Body of pancreas (tissue), 4 donors: ENCODE measurements at regions of chr20 and their contacts with region 1.

Region 1: GRCh38 chr20:21503345-21503744 is 10.5 kb downstream of the NKX2-2 start:
- DNase-seq: no peak
- ATAC-seq: no peak
- H3K4me3 ChIP-seq: no peak overlapping the region
- H3K27ac ChIP-seq: no peak overlapping the region
- H3K4me1 ChIP-seq: peaks cover 16% of the 10 kb centered on the region
- H3K27me3 ChIP-seq: peaks cover 0 to 16% of the 10 kb centered on the region in 2 donors
- CTCF ChIP-seq: no peak
- POLR2A ChIP-seq: no peak

Region 2: DNA sequence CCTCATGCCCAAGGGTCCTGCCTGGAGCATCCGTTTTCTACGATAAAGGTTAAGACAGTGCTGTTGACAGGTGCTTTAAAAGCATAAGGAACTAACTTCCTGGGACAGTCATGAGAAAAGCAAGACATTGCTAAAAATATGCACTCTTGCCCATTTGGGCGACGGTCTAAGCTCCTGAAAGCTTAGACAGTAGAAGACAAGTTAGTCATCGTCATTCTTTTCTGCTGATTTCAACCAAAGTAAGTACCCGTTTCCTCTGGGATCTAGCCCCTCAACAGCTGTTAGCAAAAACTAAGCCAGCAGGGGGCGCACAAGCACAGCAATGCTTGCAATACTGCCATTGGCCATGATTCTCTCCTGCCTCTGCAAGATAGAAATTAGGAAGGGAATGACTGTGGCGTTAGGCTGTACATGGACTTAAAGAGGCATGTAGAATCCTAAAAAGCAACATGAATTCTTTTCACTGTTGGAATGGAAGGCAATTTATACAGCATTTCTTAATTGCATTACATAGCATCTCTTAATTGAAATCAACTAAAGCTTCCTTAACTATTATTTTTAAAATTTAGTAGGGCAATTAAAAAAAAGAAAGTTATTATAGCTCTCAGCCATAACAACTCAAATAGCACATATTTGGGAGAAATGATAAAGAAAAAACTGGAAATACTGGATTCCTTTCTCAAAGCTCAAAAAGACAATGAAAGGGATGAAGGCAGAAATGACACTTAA is 643.1 kb before region 1 on chr20:
- intact Hi-C with region 1: loop called (anchors 5 kb)
- DNase-seq: peak; percentile 83 to 91 (median 86)
- ATAC-seq: peak; percentile 68
- H3K4me3 ChIP-seq: no peak overlapping the region
- H3K27ac ChIP-seq: no peak overlapping the region
- H3K4me1 ChIP-seq: no peaks in the 10 kb centered on the region
- H3K27me3 ChIP-seq: no peaks in the 10 kb centered on the region
- CTCF ChIP-seq: peak; percentile 84 to 95 (median 90)
- POLR2A ChIP-seq: no peak

Region 3: GRCh38 chr20:21099751-21100577 is 403.4 kb before region 1 on chr20:
- intact Hi-C with region 1: no loop called
- DNase-seq: peak in 3 of 4 donors; percentile 23 to 53 (median 38)
- ATAC-seq: no peak
- H3K4me3 ChIP-seq: peak overlapping the region in 1 of 2 donors; percentile 12
- H3K27ac ChIP-seq: no peak overlapping the region
- H3K4me1 ChIP-seq: peaks cover 32% of the 10 kb centered on the region
- H3K27me3 ChIP-seq: peaks cover 0 to 40% of the 10 kb centered on the region in 2 donors
- CTCF ChIP-seq: no peak
- POLR2A ChIP-seq: no peak

Region 4: DNA sequence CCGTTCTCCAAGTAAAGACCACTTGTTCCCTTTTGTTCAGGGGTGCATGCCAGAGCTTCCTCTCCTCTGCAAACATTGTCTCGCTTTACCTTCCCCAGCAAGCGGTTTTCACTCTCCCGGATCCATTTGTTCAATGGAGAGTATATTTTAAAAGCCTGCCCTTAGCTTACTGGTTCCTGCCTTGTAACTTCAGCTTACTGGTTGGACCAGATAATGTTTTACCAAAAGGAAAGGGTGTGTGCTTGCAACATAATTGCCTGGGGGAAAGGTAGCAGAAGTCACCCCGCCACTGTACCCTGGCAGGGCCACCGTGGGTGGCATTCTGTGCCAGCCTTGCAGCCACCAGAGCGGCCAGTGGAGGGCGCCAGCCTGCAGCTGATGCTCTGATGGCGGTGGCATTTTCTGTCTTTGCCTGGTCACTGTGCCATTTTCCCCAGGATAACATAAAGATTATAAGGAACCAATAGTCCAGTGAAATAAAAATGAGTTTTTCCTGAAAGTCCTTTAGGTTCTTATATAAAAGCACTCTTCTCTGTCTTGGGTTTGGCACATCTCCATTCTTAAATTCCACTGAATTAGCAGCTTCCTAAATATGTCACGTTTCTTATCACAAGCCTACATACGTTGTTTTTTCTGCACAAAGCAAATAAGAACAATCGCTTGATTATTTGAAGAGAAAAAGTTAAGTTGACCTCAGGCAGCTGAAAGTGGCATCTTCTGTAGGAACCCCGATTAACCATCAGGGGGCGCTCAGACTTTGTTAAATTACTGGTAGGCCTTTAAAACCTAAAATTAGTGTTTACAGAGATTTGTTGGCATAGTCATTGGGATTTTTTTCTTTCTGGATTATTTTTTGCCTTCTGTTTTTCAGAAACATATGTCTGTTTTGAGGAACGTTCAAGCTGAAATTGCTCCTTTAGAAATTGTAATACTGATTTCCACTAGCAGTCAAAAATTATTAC is 267.6 kb before region 1 on chr20:
- intact Hi-C with region 1: loop called (anchors 5 kb)
- DNase-seq: peak; percentile 50 to 71 (median 66)
- ATAC-seq: peak; percentile 68
- H3K4me3 ChIP-seq: no peak overlapping the region
- H3K27ac ChIP-seq: no peak overlapping the region
- H3K4me1 ChIP-seq: peaks cover 5% of the 10 kb centered on the region
- H3K27me3 ChIP-seq: no peaks in the 10 kb centered on the region
- CTCF ChIP-seq: peak; percentile 33 to 84 (median 69)
- POLR2A ChIP-seq: no peak

Region 5: DNA sequence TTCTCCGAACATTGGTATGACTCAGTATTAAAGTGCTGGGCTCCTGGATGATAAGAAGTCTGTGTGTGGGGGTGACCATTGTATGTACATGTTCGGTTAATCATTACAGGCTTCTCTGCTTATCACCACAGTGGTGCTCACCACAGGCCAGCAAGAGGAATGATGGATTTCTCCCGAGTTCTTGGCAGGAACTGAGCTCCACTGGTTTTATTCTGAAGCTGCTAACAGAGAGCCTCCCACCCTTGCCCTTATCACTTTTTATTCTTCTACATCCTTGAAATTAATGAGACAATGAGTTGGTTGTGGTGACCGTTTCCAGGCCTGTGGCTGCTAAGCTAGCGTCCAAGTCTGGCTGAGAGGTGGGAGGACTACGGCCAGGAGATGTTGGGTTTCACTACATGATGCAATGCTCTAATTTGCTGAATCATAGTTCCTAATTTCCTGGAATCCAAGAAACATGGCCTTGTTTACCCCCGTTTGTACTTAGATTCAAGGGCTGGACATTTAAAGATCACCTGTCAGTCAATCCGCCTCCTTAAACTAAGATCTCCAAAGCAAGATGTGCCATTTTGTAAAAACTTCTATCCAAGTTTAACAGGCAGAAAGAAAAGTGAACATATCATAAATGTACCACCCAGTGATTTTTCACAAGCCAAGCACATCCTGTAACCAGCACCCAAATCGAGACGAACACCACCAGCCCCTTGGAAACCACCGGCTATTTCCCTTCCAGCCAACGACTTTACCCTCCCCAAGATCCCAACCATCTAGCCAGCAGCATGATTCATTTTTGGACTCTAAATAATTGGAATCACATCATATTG is 908.5 kb after region 1 on chr20:
- intact Hi-C with region 1: no loop called
- DNase-seq: peak; percentile 64 to 89 (median 74)
- ATAC-seq: peak; percentile 99
- H3K4me3 ChIP-seq: no peak overlapping the region
- H3K27ac ChIP-seq: peak overlapping the region; percentile 68 to 83 (median 73)
- H3K4me1 ChIP-seq: peaks cover 24% of the 10 kb centered on the region
- H3K27me3 ChIP-seq: no peaks in the 10 kb centered on the region
- CTCF ChIP-seq: no peak
- POLR2A ChIP-seq: peak in 2 of 3 donors; percentile 47 to 51